ENCODE measurements at regions of chr19 and their contacts with region 1.

Region 1: GRCh38 chr19:37931881-37932655 is 25.1 kb downstream of the SIPA1L3 start:
- DNase-seq: peak; percentile 86

Region 2: GRCh38 chr19:36139473-36140303 is 1792.4 kb before region 1 on chr19 and contains the start of gene CAPNS1:
- intact Hi-C with region 1: loop called in 1 of 2 experiments (anchors 5 kb)
- DNase-seq: peak; percentile 100
- total RNA-seq, gene CAPNS1: 586 to 597 TPM

Region 3: DNA sequence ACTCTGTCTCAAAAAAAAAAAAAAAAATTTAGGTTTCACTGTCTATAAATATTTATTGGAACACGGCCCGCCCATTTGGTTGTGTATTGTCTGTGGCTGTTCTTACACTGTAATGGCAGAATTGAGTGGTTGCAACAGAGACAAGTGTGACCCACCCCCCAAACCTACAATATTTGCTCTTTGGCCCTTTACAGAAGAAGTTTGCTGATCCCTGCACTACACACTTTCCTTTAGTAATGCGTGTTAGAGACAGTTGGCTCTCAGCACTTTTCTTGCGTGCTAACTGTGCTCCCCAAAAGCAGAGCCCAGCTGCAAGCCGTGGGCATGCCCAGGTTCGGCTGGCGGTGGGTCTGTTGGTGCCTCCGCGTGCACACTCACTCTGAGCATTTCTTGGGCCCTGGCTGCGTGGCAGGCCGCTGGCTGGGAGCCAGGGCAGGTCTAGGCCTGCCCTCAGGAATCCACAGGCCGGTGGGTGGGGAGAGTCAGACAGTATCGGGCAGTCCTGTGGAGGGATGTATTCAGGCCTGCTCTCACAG is 47.5 kb after region 1 on chr19:
- intact Hi-C with region 1: loop called in 1 of 2 experiments (anchors 5 kb)
- DNase-seq: peak; percentile 74

Region 4: DNA sequence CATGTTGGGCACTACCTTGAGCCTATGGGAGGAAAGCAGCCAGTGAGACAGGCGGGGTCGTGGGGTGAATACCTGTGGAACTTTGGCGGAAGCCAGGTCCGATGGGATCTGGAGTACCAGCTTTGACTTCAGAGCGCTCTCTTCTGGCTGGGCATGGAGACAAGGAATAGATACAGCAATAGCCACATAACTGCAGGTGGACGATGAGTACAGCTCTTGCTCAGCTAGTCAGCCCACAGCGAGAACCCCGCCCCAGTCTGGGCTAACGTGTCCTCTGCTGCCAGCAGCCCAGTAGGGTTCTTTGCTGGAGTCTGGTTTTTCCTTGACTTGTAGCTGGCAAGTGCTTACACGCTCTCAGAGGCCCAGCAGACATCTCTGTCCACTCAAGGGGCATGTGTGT is 58.3 kb after region 1 on chr19:
- intact Hi-C with region 1: no loop called
- DNase-seq: no peak

Measured in posterior vena cava (tissue), 2 donors.